ENCODE measurements at regions of chr6 and their contacts with region 1.

Region 1: DNA sequence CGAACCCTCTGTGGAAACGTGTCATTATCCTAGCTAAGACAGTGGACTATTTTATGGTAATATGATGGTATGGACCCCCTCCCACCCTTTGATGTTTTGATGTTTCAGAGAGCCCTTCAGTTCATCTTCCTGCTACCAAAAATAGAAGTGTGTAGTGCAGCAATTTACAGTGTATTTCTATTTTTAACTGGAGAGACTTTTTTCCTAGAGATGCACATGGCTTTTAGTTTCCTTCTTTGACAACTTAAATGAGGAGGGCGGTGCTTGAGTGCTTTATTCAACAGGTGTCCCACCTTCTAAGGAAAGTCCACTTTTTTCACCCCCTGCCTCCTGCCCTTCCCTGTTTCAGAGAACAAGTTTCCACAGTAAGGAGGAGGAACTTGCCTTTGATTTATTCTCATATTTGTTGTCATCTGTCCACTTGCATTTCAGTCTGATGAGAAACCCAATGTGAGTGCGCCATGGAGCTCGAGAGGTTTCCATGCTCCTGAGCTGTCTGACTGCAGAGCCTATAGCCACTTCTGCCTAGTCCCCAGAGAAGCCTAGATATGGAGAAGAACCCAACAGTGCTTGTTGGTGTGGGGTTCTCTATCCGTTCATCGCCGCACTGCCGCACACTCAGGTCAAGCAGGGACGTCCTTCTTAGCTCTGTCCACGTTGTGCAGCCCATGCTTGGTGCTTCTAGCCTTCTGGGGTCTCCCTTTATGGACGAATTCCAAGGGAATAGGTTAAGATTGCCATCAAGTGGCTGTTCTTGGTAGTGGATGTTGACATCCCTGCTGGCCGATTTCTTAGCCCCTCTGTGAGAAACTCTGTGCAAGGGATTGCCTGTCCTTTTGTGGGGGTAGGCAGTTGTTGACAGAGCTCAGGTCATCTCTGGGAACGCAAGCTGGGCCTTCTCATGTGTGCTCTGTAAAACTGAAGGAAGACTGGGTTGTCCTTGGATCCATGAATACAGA is 144.2 kb downstream of the JARID2 start:
- DNase-seq: peak; percentile 60
- CTCF ChIP-seq: peak; percentile 49

Region 2: DNA sequence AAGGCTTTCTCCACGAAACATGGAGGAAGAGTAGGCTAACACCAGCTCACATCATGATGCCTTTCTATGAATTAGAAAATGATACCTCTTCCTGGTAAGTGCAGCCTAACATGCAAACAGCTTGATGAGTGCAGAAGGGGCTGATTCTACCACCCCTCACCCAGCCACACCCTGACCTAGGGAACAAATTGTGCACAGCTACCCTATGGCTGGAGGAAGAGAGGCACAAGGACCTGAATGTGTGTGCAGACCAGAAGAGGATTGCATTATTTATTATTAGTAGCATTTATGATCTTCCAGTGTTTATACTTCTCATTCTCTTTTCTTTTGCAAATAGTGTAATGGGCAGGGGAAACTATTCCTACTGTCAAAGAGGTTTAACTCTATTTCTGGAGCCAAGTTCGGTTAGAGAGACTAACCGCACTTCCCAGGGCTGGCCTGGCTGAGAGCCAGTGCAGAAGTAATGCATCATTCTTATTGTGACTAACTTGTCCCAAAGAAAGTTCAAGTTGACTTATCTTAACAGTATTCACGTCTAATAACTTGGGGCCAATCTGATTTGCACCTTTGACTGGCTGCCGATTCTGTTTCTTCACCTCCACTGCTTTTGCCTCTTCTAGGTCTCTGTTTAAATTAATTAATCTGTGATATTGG is 1035.0 kb before region 1 on chr6:
- CTCF ChIA-PET with region 1: no interaction called
- POLR2A ChIA-PET with region 1: no interaction called
- DNase-seq: no peak
- CTCF ChIP-seq: no peak

Region 3: GRCh38 chr6:15378866-15379265 is 11.2 kb before region 1 on chr6:
- CTCF ChIA-PET with region 1: interaction called, 15 read pairs
- POLR2A ChIA-PET with region 1: no interaction called
- DNase-seq: no peak
- CTCF ChIP-seq: no peak

Measured in GM10248 (cell line).